ENCODE measurements at regions of chr12 and their contacts with region 1.

Region 1: GRCh38 chr12:76020731-76021672 is 10.6 kb downstream of the PHLDA1 start:
- DNase-seq: peak; percentile 71
- H3K4me3 Mint-ChIP-seq: peak overlapping the region; percentile 35
- H3K27ac Mint-ChIP-seq: peak overlapping the region; percentile 95
- H3K4me1 Mint-ChIP-seq: peaks cover 25% of the 10 kb centered on the region
- H3K27me3 Mint-ChIP-seq: no peaks in the 10 kb centered on the region

Region 2: GRCh38 chr12:75977952-75978671 is 42.9 kb before region 1 on chr12:
- CTCF ChIA-PET with region 1: interaction called, 20 read pairs
- DNase-seq: peak; percentile 79
- H3K4me3 Mint-ChIP-seq: peak overlapping the region; percentile 13
- H3K27ac Mint-ChIP-seq: peak overlapping the region; percentile 85
- H3K4me1 Mint-ChIP-seq: peaks cover 45% of the 10 kb centered on the region
- H3K27me3 Mint-ChIP-seq: peaks cover 1% of the 10 kb centered on the region

Measured in activated naive CD4-positive, alpha-beta T cell treated with anti-CD3 and anti-CD28 coated beads, Interleukin-2, amount 10 ng/mL, durations not matched to agents 7 days and 5 days (primary cell).